ENCODE measurements at regions of chr7 and their contacts with region 1.

Region 1: GRCh38 chr7:90424720-90425119 is 21.5 kb downstream of the CLDN12 start:
- DNase-seq: no peak
- ATAC-seq: no peak

Region 2: DNA sequence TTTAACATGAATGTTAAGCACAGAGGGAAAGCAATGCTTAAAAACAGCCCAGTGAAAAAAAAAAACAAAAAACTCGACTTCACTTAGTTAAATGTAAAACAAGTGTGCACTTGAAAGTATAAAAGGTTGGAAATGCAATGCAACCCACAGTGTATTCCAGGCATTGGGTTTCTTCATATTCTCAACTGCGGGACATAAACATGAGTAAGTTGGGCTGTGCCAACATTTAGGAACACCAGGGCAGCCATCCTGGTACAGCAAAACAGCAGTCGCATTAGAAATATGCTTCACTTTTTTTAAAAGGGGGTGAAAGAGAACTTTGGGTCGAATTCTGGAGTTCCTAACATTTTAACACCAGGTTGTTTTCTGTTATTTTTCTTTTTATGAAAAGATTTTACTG is 269.5 kb before region 1 on chr7:
- intact Hi-C with region 1: loop called (anchors 10 kb)
- DNase-seq: no peak
- ATAC-seq: no peak

Region 3: GRCh38 chr7:90173127-90173844 is 251.4 kb before region 1 on chr7:
- intact Hi-C with region 1: no loop called
- DNase-seq: no peak
- ATAC-seq: no peak

Region 4: GRCh38 chr7:90271753-90272152 is 153.0 kb before region 1 on chr7:
- intact Hi-C with region 1: loop called (anchors 10 kb)
- DNase-seq: no peak
- ATAC-seq: no peak

Region 5: GRCh38 chr7:90312745-90313144 is 112.0 kb before region 1 on chr7:
- intact Hi-C with region 1: loop called (anchors 10 kb)
- DNase-seq: no peak
- ATAC-seq: no peak

Region 6: GRCh38 chr7:90568213-90568612 is 143.5 kb after region 1 on chr7:
- intact Hi-C with region 1: no loop called
- DNase-seq: no peak
- ATAC-seq: no peak

Region 7: DNA sequence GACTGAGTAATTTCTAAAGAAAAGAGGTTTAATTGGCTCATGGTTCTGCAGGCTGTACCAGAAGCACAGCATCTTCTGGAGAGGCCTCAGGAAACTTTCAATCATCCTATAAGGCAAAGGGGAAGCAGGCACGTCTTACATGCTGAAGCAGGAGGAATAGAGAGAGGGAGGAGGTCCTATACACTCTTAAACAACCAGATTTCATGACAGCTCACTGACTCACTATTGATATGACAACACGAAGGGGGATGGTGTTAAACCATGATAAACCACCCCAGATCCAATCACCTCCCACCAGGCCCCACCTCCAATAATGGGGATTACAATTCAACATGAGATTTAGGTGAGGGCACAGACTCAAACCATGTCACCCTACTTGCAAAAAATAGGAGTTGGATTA is 372.9 kb after region 1 on chr7:
- intact Hi-C with region 1: no loop called
- DNase-seq: no peak
- ATAC-seq: no peak